Activated naive CD4-positive, alpha-beta T cell treated with anti-CD3 and anti-CD28 coated beads, Interleukin-2, amount 10 ng/mL, durations not matched to agents 7 days and 5 days (primary cell): ENCODE measurements at regions of chr7 and their contacts with region 1.

Region 1: GRCh38 chr7:2384354-2385243 is 18.8 kb upstream of the CHST12 start:
- DNase-seq: no peak
- H3K4me3 Mint-ChIP-seq: no peak overlapping the region
- H3K27ac Mint-ChIP-seq: no peak overlapping the region
- H3K4me1 Mint-ChIP-seq: peaks cover 2% of the 10 kb centered on the region
- H3K27me3 Mint-ChIP-seq: no peaks in the 10 kb centered on the region

Region 2: GRCh38 chr7:2258661-2259365 is 125.8 kb before region 1 on chr7:
- CTCF ChIA-PET with region 1: no interaction called
- DNase-seq: no peak
- H3K4me3 Mint-ChIP-seq: no peak overlapping the region
- H3K27ac Mint-ChIP-seq: no peak overlapping the region
- H3K4me1 Mint-ChIP-seq: peaks cover 8% of the 10 kb centered on the region
- H3K27me3 Mint-ChIP-seq: no peaks in the 10 kb centered on the region

Region 3: GRCh38 chr7:2431260-2431867 is 46.8 kb after region 1 on chr7:
- CTCF ChIA-PET with region 1: interaction called, 17 read pairs
- DNase-seq: peak; percentile 57
- H3K4me3 Mint-ChIP-seq: no peak overlapping the region
- H3K27ac Mint-ChIP-seq: no peak overlapping the region
- H3K4me1 Mint-ChIP-seq: peaks cover 2% of the 10 kb centered on the region
- H3K27me3 Mint-ChIP-seq: no peaks in the 10 kb centered on the region

Region 4: GRCh38 chr7:2471396-2471795 is 86.8 kb after region 1 on chr7:
- CTCF ChIA-PET with region 1: interaction called, 17 read pairs
- DNase-seq: no peak
- H3K4me3 Mint-ChIP-seq: no peak overlapping the region
- H3K27ac Mint-ChIP-seq: no peak overlapping the region
- H3K4me1 Mint-ChIP-seq: peaks cover 6% of the 10 kb centered on the region
- H3K27me3 Mint-ChIP-seq: peaks cover 42% of the 10 kb centered on the region